ENCODE measurements at regions of chr1 and their contacts with region 1.

Region 1: DNA sequence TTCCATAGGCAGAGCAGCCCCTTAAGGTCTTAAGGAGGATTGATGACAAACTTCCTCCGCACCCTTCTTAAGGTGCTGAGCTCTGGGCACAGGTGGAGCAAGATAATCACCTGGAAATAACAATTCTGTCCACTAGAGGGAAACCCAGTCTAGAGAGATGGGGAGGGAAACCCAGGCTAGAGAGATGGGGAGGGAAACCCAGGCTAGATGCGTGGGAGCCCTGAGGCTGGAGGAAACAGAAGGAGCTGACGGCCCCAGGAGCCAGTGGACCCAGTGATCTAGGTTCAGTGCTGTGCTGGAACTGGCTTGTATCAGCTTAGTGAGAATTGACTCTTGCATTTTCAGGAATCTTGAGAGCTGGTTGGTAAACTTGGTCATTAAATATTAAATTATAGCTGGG is 17.8 kb upstream of the MYCL start:
- DNase-seq: peak in 1 of 2 donors; percentile 83
- ATAC-seq: peak; percentile 64 to 86 (median 82)
- H3K4me3 ChIP-seq: no peak overlapping the region
- H3K4me3 Mint-ChIP-seq: no peak overlapping the region
- H3K27ac ChIP-seq: no peak overlapping the region
- H3K27ac Mint-ChIP-seq: no peak overlapping the region
- H3K4me1 ChIP-seq: no peaks in the 10 kb centered on the region
- H3K4me1 Mint-ChIP-seq: no peaks in the 10 kb centered on the region
- H3K27me3 ChIP-seq: no peaks in the 10 kb centered on the region
- H3K27me3 Mint-ChIP-seq: peaks cover 0 to 5% of the 10 kb centered on the region in 2 donors
- CTCF ChIP-seq: peak; percentile 38

Region 2: GRCh38 chr1:39901698-39902459 is 17.7 kb before region 1 on chr1 and contains the start of gene MYCL:
- intact Hi-C with region 1: no loop called
- DNase-seq: peak; percentile 46 to 80
- ATAC-seq: peak; percentile 78 to 80 (median 78)
- H3K4me3 ChIP-seq: peak within 1 kb of the TSS; percentile 52
- H3K4me3 Mint-ChIP-seq: peak within 1 kb of the TSS; percentile 75
- H3K27ac ChIP-seq: no peak within 1 kb of the TSS
- H3K27ac Mint-ChIP-seq: no peak within 1 kb of the TSS
- H3K4me1 ChIP-seq: peaks cover 16% of the 10 kb centered on the region
- H3K4me1 Mint-ChIP-seq: peaks cover 0 to 12% of the 10 kb centered on the region in 2 donors
- H3K27me3 ChIP-seq: peaks cover 19% of the 10 kb centered on the region
- H3K27me3 Mint-ChIP-seq: peaks cover 42 to 52% of the 10 kb centered on the region in 2 donors
- CTCF ChIP-seq: peak; percentile 62
- total RNA-seq, gene MYCL: 0.70 to 1.9 (median 0.92) TPM

Region 3: DNA sequence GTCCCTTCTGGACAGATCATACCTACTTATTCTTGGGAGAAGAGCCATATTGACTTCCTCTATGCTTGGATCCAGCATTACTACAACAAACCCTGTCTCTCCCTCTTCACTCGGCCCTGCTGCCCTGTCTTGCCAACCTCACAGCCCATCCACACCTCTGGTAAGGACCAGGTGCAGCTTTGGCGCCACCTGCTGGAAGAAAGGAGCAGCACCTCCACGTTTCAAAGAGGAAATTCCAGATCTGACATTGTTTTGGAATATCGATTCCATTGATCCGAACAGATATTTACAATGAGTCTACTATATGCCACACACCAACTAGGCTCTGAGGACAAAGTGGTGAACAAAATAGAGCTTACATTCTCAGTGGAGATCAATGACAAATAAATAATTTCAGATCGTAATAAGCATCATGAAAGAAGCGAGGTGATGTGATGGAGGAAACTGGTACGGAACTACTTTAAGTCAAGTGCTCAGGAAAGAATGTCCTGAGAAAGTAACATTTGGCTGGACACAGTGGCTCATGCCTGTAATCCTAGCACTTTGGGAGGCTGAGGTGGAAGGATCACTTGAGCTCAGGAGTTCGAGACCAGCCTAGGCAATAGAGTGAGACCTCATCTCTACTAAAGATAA is 54.1 kb after region 1 on chr1:
- intact Hi-C with region 1: loop called (anchors 2 kb)
- DNase-seq: peak; percentile 66 to 86
- ATAC-seq: peak; percentile 78 to 88 (median 88)
- H3K4me3 ChIP-seq: no peak overlapping the region
- H3K4me3 Mint-ChIP-seq: no peak overlapping the region
- H3K27ac ChIP-seq: no peak overlapping the region
- H3K27ac Mint-ChIP-seq: no peak overlapping the region
- H3K4me1 ChIP-seq: peaks cover 5% of the 10 kb centered on the region
- H3K4me1 Mint-ChIP-seq: peaks cover 7% of the 10 kb centered on the region in 2 donors
- H3K27me3 ChIP-seq: no peaks in the 10 kb centered on the region
- H3K27me3 Mint-ChIP-seq: no peaks in the 10 kb centered on the region
- CTCF ChIP-seq: peak; percentile 98

Region 4: GRCh38 chr1:40032240-40032891 is 112.8 kb after region 1 on chr1:
- intact Hi-C with region 1: loop called (anchors 1 kb)
- DNase-seq: peak in 1 of 2 donors; percentile 80
- ATAC-seq: peak; percentile 75 to 85 (median 82)
- H3K4me3 ChIP-seq: no peak overlapping the region
- H3K4me3 Mint-ChIP-seq: no peak overlapping the region
- H3K27ac ChIP-seq: no peak overlapping the region
- H3K27ac Mint-ChIP-seq: peak overlapping the region; percentile 1 to 47
- H3K4me1 ChIP-seq: peaks cover 31% of the 10 kb centered on the region
- H3K4me1 Mint-ChIP-seq: peaks cover 24 to 40% of the 10 kb centered on the region in 2 donors
- H3K27me3 ChIP-seq: no peaks in the 10 kb centered on the region
- H3K27me3 Mint-ChIP-seq: no peaks in the 10 kb centered on the region
- CTCF ChIP-seq: peak; percentile 67

Region 5: DNA sequence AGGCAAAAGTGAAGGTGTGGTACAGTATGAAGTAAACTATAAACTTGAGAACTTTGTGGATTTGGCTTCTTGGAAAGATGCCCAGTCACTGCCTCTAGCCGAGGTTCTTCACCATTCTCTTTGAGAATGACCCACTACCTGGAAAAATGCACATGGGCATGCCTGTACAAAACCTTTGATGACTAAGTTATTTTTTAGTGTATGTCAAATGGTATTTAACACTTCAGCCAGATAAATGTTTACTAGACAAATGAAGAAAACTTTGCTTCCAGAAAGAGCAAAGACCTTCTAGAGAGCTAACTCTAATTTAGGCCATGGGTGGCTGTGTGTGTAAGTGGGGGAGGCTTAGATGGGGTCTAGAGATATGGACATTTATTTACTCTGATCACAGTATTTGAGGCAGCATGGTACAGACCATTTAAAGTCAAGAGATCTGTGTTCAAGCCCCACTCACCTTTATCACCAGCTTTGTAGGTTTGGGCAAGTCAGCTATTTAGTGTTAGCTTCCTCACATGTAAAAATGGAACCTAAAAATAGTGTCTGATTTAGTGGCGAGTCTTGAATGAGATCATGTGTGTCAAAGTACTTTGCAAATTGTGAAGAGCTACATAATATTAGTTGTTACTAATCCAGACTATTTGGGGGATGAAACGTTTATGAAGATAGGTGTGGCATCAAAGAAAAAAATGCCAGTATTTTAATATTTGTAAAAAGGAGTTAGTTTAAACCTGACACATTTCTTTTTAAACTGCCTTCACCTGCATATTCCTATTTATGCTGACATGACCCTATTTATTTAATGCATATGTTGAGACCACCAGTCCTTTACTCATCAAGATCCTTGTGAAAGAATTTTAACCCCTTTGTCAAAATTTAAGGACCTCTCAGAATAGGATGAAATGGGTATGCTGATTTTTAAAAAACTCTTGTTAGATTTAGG is 792.2 kb after region 1 on chr1:
- intact Hi-C with region 1: no loop called
- DNase-seq: no peak
- ATAC-seq: no peak
- H3K4me3 ChIP-seq: no peak overlapping the region
- H3K4me3 Mint-ChIP-seq: peak overlapping the region; percentile 99
- H3K27ac ChIP-seq: peak overlapping the region; percentile 92
- H3K27ac Mint-ChIP-seq: peak overlapping the region; percentile 97
- H3K4me1 ChIP-seq: peaks cover 18% of the 10 kb centered on the region
- H3K4me1 Mint-ChIP-seq: peaks cover 59 to 60% of the 10 kb centered on the region in 2 donors
- H3K27me3 ChIP-seq: no peaks in the 10 kb centered on the region
- H3K27me3 Mint-ChIP-seq: no peaks in the 10 kb centered on the region
- CTCF ChIP-seq: no peak